HCT116 (cell line): ENCODE measurements at regions of chr6 and their contacts with region 1.

Region 1: GRCh38 chr6:30556066-30556905 is at the start of gene GNL1:
- DNase-seq: peak; percentile 95
- ATAC-seq: peak; percentile 91
- H3K4me3 ChIP-seq: peak within 1 kb of the TSS; percentile 88 to 95
- H3K27ac ChIP-seq: peak within 1 kb of the TSS; percentile 96
- H3K4me1 ChIP-seq: peaks cover 10 to 23% of the 10 kb centered on the region in 2 experiments; a peak in 3 of 4 replicates
- H3K27me3 ChIP-seq: no peaks in the 10 kb centered on the region
- CTCF ChIP-seq: no peak
- POLR2A ChIP-seq: peak; percentile 34
- RAD21 ChIP-seq: no peak
- total RNA-seq, gene GNL1: 113 TPM

Region 2: DNA sequence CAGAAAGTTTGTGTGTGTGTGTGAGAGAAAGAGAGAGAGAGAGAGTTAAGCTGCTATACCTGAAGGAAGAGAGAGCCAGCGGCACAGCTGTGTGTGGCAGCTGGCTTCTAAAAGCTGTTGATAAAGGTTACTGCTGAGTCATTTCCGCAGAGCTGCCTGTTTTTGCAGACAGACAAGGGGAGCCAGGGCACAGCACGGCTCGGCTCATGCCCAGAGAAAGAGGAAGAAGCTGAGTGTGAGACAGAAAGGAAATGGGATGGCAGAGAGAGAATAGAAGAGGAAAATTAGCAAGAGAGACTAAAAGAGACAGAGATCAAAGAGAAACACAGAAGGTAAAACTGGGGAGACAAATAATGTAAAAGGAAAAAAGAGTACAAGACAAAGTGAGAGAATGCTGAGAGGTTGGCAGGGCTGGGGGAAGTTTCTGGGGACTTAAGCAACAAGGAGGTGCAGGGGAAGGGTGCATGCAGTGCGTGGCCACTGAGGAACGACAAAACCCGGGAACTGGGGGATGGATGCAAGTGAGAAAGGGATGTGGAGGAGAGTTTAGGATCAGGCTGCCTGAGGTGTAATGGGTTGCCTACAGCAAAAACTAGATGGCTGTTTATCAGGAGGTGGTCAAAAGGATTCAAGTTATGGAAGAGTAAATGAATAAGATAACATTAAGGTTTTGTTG is 591.3 kb before region 1 on chr6:
- CTCF ChIA-PET with region 1: no interaction called
- POLR2A ChIA-PET with region 1: no interaction called
- RAD21 ChIA-PET with region 1: no interaction called
- intact Hi-C with region 1: no loop called
- DNase-seq: peak; percentile 73
- ATAC-seq: peak; percentile 76
- H3K4me3 ChIP-seq: peak overlapping the region; percentile 47 to 50
- H3K27ac ChIP-seq: peak overlapping the region; percentile 86
- H3K4me1 ChIP-seq: peaks cover 41 to 62% of the 10 kb centered on the region in 2 experiments
- H3K27me3 ChIP-seq: no peaks in the 10 kb centered on the region
- CTCF ChIP-seq: no peak
- POLR2A ChIP-seq: no peak
- RAD21 ChIP-seq: peak; percentile 34; the same call in 1 of the 2 replicates

Region 3: GRCh38 chr6:30541515-30542403 is 14.5 kb before region 1 on chr6:
- CTCF ChIA-PET with region 1: interaction called, 25 read pairs
- POLR2A ChIA-PET with region 1: interaction called, 10 read pairs
- RAD21 ChIA-PET with region 1: no interaction called
- intact Hi-C with region 1: no loop called
- DNase-seq: peak; percentile 83
- ATAC-seq: peak; percentile 92
- H3K4me3 ChIP-seq: peak overlapping the region; percentile 36 to 47
- H3K27ac ChIP-seq: no peak overlapping the region
- H3K4me1 ChIP-seq: peaks cover 0 to 10% of the 10 kb centered on the region in 2 experiments; a peak in 2 of 4 replicates
- H3K27me3 ChIP-seq: no peaks in the 10 kb centered on the region
- CTCF ChIP-seq: peak; percentile 84 to 99 (median 97)
- POLR2A ChIP-seq: no peak
- RAD21 ChIP-seq: peak; percentile 78

Region 4: GRCh38 chr6:30571075-30571768 is 14.9 kb after region 1 on chr6 and contains the start of gene ABCF1:
- CTCF ChIA-PET with region 1: no interaction called
- POLR2A ChIA-PET with region 1: interaction called, 12 read pairs
- RAD21 ChIA-PET with region 1: no interaction called
- intact Hi-C with region 1: loop called (anchors 1 kb)
- DNase-seq: peak; percentile 93
- ATAC-seq: peak; percentile 92
- H3K4me3 ChIP-seq: peak within 1 kb of the TSS; percentile 66 to 97
- H3K27ac ChIP-seq: peak within 1 kb of the TSS; percentile 72
- H3K4me1 ChIP-seq: peaks cover 9 to 29% of the 10 kb centered on the region in 2 experiments
- H3K27me3 ChIP-seq: no peaks in the 10 kb centered on the region
- CTCF ChIP-seq: no peak
- POLR2A ChIP-seq: peak; percentile 48
- RAD21 ChIP-seq: no peak
- total RNA-seq, gene ABCF1: 53.3 TPM

Region 5: GRCh38 chr6:30717042-30717844 is 161.0 kb after region 1 on chr6 and contains the start of gene MDC1:
- CTCF ChIA-PET with region 1: no interaction called
- POLR2A ChIA-PET with region 1: no interaction called
- RAD21 ChIA-PET with region 1: no interaction called
- intact Hi-C with region 1: loop called (anchors 5 kb)
- DNase-seq: peak; percentile 100
- ATAC-seq: peak; percentile 76
- H3K4me3 ChIP-seq: peak within 1 kb of the TSS; percentile 64 to 66
- H3K27ac ChIP-seq: peak within 1 kb of the TSS; percentile 89
- H3K4me1 ChIP-seq: peaks cover 9 to 43% of the 10 kb centered on the region in 2 experiments
- H3K27me3 ChIP-seq: no peaks in the 10 kb centered on the region
- CTCF ChIP-seq: peak in 1 of 3 experiments; percentile 31; a peak in 3 of 6 replicates
- POLR2A ChIP-seq: peak; percentile 76
- RAD21 ChIP-seq: no peak
- total RNA-seq, gene MDC1: 75.8 TPM